PC-3 (cell line): ENCODE measurements at regions of chr7 and their contacts with region 1.

Region 1: DNA sequence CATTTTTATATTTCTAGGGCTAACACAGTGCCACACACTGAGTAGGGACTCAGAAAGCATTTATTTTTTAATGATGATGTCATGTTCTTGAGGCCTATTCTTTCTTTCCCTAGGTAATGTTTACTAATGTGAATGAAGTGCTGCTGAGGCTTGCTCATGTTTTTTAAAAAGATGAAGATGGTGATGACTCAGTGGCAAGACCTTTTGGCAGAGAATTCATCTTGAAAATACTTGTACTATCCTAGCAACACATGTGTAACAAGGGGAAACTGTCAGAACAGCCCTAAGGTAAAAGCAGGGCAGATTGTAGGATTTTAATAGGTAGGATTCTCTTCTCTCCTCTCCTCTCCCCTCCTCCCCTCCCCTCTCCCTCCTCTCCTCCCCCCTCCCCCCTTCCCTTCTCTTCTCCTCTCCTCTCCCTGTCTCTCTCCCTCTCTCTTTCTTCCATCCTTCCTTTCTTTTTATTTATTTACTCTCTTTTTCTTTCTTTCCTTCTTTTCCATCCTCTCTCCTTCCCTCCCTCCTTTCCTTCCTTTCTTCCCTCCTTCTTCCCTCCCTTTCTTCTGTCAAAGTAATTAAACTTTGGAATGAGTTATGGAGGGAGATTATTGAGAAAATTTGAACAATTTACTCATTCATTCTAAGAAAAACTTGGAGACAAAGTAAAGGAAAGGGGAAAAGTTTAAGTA is 75.3 kb downstream of the ZNF92 start:
- DNase-seq: peak; percentile 88
- ATAC-seq: peak; percentile 84
- H3K4me3 ChIP-seq: peak overlapping the region; percentile 39; the same call in 1 of the 2 replicates
- H3K27ac ChIP-seq: peak overlapping the region; percentile 85
- H3K4me1 ChIP-seq: peaks cover 26% of the 10 kb centered on the region
- H3K27me3 ChIP-seq: no peaks in the 10 kb centered on the region
- CTCF ChIP-seq: no peak

Region 2: GRCh38 chr7:65216459-65216858 is 232.5 kb before region 1 on chr7:
- CTCF ChIA-PET with region 1: no interaction called
- POLR2A ChIA-PET with region 1: no interaction called
- intact Hi-C with region 1: loop called (anchors 5 kb)
- DNase-seq: peak; percentile 65
- ATAC-seq: peak; percentile 43
- H3K4me3 ChIP-seq: no peak overlapping the region
- H3K27ac ChIP-seq: no peak overlapping the region
- H3K4me1 ChIP-seq: no peaks in the 10 kb centered on the region
- H3K27me3 ChIP-seq: no peaks in the 10 kb centered on the region
- CTCF ChIP-seq: peak; percentile 70

Region 3: DNA sequence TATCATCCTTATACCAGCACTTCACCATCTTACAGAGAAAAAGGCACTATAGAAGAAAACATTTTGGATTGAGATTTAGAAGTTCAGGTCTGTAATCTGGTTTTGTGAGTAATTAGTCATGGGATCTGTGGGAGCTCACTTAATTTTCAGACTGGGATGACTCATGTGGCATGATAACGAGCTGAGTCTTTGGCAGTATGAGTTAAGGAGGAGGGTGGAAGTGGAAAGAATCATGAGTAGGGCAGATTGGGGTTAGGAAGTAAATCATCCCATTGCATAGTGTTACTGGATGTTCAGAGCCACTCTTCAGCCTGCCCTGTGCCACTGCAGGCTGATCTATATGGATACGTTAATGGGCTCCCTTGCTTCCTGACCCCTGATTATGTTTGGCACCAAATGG is 10.4 kb before region 1 on chr7:
- CTCF ChIA-PET with region 1: no interaction called
- POLR2A ChIA-PET with region 1: no interaction called
- intact Hi-C with region 1: loop called (anchors 1 kb)
- DNase-seq: peak; percentile 92
- ATAC-seq: peak; percentile 77
- H3K4me3 ChIP-seq: no peak overlapping the region
- H3K27ac ChIP-seq: peak overlapping the region; percentile 57
- H3K4me1 ChIP-seq: peaks cover 41% of the 10 kb centered on the region
- H3K27me3 ChIP-seq: no peaks in the 10 kb centered on the region
- CTCF ChIP-seq: no peak

Region 4: DNA sequence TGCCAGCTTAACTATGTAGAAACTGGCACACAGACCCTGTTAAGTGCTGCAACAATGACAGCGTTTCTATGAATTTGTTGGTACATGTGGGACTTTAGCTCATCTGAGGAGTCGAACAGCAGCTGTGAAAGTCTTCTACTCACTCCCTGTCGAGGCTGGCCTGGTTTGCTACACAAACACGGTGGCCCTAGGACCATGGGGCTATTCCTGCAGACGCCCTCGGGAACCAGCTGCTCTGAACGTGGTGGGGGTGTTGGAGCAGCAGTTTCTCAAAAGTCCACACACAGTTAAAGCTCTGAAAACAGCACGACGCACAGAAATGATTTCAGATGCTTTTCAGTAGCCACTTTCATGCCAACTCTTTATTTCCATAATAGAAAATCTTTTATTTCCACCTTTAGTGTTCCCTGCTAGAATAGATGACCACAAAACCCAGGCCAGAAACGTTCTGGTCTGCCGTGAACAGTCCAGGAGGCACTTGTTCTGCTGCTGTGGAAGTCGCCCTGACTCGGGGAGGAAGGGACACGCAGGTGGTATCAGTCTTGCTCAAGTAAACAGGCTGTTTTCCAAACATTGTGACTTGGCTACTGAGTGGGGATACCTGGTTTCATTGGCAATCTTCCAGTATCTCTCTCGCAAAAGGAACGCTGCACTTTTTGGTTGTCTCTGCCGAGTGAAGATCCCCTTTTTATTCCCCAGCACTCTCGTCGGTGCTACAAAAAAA is 511.6 kb after region 1 on chr7:
- CTCF ChIA-PET with region 1: no interaction called
- POLR2A ChIA-PET with region 1: no interaction called
- intact Hi-C with region 1: no loop called
- DNase-seq: no peak
- ATAC-seq: no peak
- H3K4me3 ChIP-seq: no peak overlapping the region
- H3K27ac ChIP-seq: no peak overlapping the region
- H3K4me1 ChIP-seq: no peaks in the 10 kb centered on the region
- H3K27me3 ChIP-seq: no peaks in the 10 kb centered on the region
- CTCF ChIP-seq: no peak

Region 5: GRCh38 chr7:66033471-66034385 is 584.8 kb after region 1 on chr7:
- CTCF ChIA-PET with region 1: no interaction called
- POLR2A ChIA-PET with region 1: no interaction called
- intact Hi-C with region 1: no loop called
- DNase-seq: no peak
- ATAC-seq: no peak
- H3K4me3 ChIP-seq: no peak overlapping the region
- H3K27ac ChIP-seq: no peak overlapping the region
- H3K4me1 ChIP-seq: no peaks in the 10 kb centered on the region
- H3K27me3 ChIP-seq: no peaks in the 10 kb centered on the region
- CTCF ChIP-seq: no peak